ENCODE measurements at regions of chr1 and their contacts with region 1.

Region 1: DNA sequence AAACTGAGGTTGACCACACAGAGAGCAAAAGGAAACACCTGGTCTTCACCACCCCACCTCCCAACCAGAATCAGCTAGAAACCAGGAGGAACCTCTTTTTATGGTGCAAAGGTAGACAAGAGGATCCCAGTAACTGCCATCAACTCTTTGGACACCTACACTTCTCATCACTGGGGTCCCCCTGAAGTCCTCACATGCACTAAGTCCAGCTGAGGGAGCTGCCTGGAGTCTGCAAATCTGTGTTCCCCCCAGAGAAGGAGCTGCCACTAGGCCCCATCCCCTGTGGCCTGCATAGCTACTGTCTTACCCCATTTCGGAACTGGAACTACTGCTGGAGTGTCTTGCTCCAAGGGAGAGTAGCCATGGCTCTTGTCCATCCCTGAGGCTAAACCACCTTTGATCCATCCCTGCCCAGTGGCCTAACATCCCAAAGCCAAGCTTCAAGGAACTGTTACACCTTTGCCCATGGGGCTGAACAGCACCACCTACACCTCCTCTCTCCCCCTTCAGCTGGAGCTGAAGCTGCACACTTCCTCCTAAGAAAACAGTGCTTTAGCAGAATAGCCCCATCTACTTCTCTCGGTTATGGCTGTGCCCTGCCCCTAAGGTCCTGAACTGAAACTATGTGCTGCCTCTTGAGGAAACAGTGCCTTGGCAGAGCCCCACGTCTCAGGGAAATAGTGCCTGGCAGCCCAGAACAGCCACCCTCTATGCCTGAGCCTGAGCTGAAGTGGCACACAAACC is 85.4 kb upstream of the CD53 start:
- DNase-seq: no peak
- H3K4me3 ChIP-seq: no peak overlapping the region
- H3K27ac ChIP-seq: no peak overlapping the region
- H3K4me1 ChIP-seq: no peaks in the 10 kb centered on the region
- H3K27me3 ChIP-seq: no peaks in the 10 kb centered on the region
- CTCF ChIP-seq: no peak
- EP300 ChIP-seq: no peak
- RAD21 ChIP-seq: no peak

Region 2: GRCh38 chr1:110798691-110799256 is 11.3 kb after region 1 on chr1:
- CTCF ChIA-PET with region 1: interaction called, 49 read pairs
- POLR2A ChIA-PET with region 1: no interaction called
- DNase-seq: no peak
- H3K4me3 ChIP-seq: no peak overlapping the region
- H3K27ac ChIP-seq: no peak overlapping the region
- H3K4me1 ChIP-seq: no peaks in the 10 kb centered on the region; a peak in 1 of 4 replicates
- H3K27me3 ChIP-seq: no peaks in the 10 kb centered on the region
- CTCF ChIP-seq: no peak
- EP300 ChIP-seq: no peak
- RAD21 ChIP-seq: no peak

Region 3: GRCh38 chr1:111801071-111801841 is 1013.8 kb after region 1 on chr1:
- CTCF ChIA-PET with region 1: no interaction called
- POLR2A ChIA-PET with region 1: no interaction called
- DNase-seq: peak; percentile 29
- H3K4me3 ChIP-seq: no peak overlapping the region
- H3K27ac ChIP-seq: no peak overlapping the region
- H3K4me1 ChIP-seq: no peaks in the 10 kb centered on the region
- H3K27me3 ChIP-seq: peaks cover 18% of the 10 kb centered on the region; the same call in 1 of the 2 replicates
- CTCF ChIP-seq: no peak
- EP300 ChIP-seq: no peak
- RAD21 ChIP-seq: 0 out of 2 replicates have a peak, but pooled peaks have one; percentile 6